AG04449 (cell line): ENCODE measurements at regions of chr12 and their contacts with region 1.

Region 1: GRCh38 chr12:110537605-110538409 is 35.7 kb downstream of the RAD9B start:
- DNase-seq: no peak
- H3K4me3 ChIP-seq: no peak overlapping the region
- CTCF ChIP-seq: no peak

Region 2: DNA sequence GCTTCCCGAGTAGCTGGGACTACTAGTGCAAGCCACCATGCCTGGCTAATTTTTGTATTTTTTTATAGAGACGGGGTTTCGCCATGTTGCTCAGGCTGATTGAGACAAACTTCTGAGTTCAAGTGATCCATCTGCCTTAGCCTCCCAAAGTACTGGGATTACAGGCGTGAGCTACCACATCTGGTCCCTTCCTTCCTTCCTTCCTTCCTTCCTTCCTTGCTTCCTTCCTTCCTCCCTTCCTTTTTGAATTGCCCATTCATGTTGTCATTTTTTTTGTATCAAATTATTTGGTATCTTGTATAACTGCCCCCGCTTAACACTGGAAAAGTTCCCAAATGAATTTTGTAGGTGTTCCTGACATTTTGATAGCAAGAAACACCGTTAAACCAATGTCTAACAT is 24.0 kb before region 1 on chr12:
- CTCF ChIA-PET with region 1: interaction called, 12 read pairs
- POLR2A ChIA-PET with region 1: no interaction called
- DNase-seq: no peak
- H3K4me3 ChIP-seq: no peak overlapping the region
- CTCF ChIP-seq: no peak